Activated B cell treated with CpG ODN at 0.5 μM for 24 hours (primary cell): ENCODE measurements at regions of chr14 and their contacts with region 1.

Region 1: DNA sequence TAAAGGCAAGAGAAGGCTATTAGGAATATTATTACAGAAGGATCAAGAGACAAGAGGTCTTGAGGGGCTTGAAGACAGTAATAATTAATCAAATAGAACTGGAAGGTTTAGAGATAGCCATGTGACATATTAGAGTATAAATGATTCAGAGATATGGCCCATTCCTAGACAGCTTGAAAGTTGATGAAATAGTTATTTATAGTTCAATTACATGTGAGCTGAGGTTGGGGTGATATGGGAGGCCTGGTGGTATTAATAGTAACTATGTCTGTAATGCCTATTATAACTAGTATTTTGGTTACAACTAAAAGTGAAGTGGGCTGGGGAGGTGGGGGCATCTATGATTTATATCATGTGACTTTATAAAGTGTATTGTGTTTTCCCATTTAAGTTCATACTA is 14.1 kb upstream of the MIS18BP1 start:
- DNase-seq: no peak
- ATAC-seq: no peak
- H3K4me3 Mint-ChIP-seq: no peak overlapping the region
- H3K27ac Mint-ChIP-seq: no peak overlapping the region
- H3K4me1 Mint-ChIP-seq: no peaks in the 10 kb centered on the region
- H3K27me3 Mint-ChIP-seq: peaks cover 5% of the 10 kb centered on the region
- CTCF ChIP-seq: no peak

Region 2: GRCh38 chr14:44846232-44846824 is 420.7 kb before region 1 on chr14:
- CTCF ChIA-PET with region 1: interaction called, 8 read pairs
- POLR2A ChIA-PET with region 1: no interaction called
- intact Hi-C with region 1: loop called (anchors 5 kb)
- DNase-seq: no peak
- ATAC-seq: no peak
- H3K4me3 Mint-ChIP-seq: no peak overlapping the region
- H3K27ac Mint-ChIP-seq: no peak overlapping the region
- H3K4me1 Mint-ChIP-seq: peaks cover 3% of the 10 kb centered on the region
- H3K27me3 Mint-ChIP-seq: peaks cover 6% of the 10 kb centered on the region
- CTCF ChIP-seq: peak; percentile 86

Region 3: DNA sequence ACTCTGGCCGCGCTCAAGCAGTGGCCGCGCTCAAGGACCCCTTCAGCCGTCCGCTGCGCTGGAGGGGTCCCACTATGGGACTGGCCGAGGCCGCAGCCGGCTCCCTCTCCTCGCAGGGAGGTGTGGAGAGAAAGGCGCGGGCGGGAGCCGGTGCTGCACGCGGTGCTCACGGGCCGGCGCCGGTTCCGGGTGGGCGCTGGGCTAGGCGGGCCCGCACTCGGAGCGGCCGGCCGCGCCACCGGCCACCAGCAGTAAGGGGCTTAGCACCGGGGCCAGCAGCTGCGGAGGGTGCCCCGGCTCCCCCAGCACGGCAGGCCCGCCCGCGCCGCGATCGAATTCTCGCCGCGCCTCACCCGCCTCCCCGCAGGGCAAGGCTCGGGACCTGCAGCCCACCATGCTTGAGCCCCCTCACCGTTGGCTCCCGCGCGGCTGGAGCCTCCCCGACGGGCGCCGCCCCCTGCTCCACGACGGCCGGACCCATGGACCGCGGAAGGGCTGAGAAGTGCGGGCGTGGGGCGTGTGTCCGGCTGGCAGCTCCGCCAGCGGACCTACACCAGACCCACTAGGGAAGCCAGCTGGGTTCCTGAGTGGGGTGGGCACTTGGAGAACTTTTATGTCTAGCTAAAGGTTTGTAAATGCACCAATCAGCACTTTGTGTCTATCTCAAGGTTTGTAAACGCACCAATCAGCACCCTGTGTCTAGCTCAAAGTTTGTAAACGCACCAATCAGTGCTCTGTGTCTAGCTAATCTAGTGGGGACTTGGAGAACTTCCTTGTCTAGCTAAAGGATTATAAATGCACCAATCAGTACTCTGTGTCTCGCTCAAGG is 354.8 kb before region 1 on chr14:
- CTCF ChIA-PET with region 1: interaction called, 15 read pairs
- POLR2A ChIA-PET with region 1: no interaction called
- intact Hi-C with region 1: loop called (anchors 1 kb)
- DNase-seq: no peak
- ATAC-seq: peak; percentile 28
- H3K4me3 Mint-ChIP-seq: no peak overlapping the region
- H3K27ac Mint-ChIP-seq: no peak overlapping the region
- H3K4me1 Mint-ChIP-seq: peaks cover 2% of the 10 kb centered on the region
- H3K27me3 Mint-ChIP-seq: peaks cover 29% of the 10 kb centered on the region
- CTCF ChIP-seq: no peak

Region 4: GRCh38 chr14:45253068-45253753 is 13.9 kb before region 1 on chr14 and contains the start of gene MIS18BP1:
- CTCF ChIA-PET with region 1: interaction called, 8 read pairs
- POLR2A ChIA-PET with region 1: interaction called, 6 read pairs
- intact Hi-C with region 1: loop called (anchors 1 kb)
- DNase-seq: peak; percentile 87
- ATAC-seq: peak; percentile 88
- H3K4me3 Mint-ChIP-seq: peak within 1 kb of the TSS; percentile 94
- H3K27ac Mint-ChIP-seq: peak within 1 kb of the TSS; percentile 95
- H3K4me1 Mint-ChIP-seq: peaks cover 38% of the 10 kb centered on the region
- H3K27me3 Mint-ChIP-seq: no peaks in the 10 kb centered on the region
- CTCF ChIP-seq: no peak
- total RNA-seq, gene MIS18BP1: 38.8 and 47.1 TPM in 2 replicates